ENCODE measurements at regions of chr11 and their contacts with region 1.

Region 1: GRCh38 chr11:82927254-82927880 is 25.8 kb downstream of the DDIAS start:
- DNase-seq: peak in 6 of 9 experiments; percentile 11 to 83 (median 31)
- ATAC-seq: peak; percentile 98
- H3K4me3 ChIP-seq: no peak overlapping the region
- H3K4me3 Mint-ChIP-seq: peak overlapping the region; percentile 26
- H3K27ac ChIP-seq: no peak overlapping the region
- H3K27ac Mint-ChIP-seq: peak overlapping the region; percentile 60
- H3K4me1 ChIP-seq: peaks cover 40% of the 10 kb centered on the region
- H3K4me1 Mint-ChIP-seq: peaks cover 53% of the 10 kb centered on the region
- H3K27me3 ChIP-seq: no peaks in the 10 kb centered on the region
- H3K27me3 Mint-ChIP-seq: no peaks in the 10 kb centered on the region
- CTCF ChIP-seq: peak; percentile 89

Region 2: GRCh38 chr11:82906244-82906654 is 21.1 kb before region 1 on chr11:
- CTCF ChIA-PET with region 1: interaction called, 5 read pairs
- POLR2A ChIA-PET with region 1: interaction called, 4 read pairs
- intact Hi-C with region 1: loop called (anchors 1 kb)
- DNase-seq: peak in 2 of 9 experiments; percentile 38 to 61
- ATAC-seq: no peak
- H3K4me3 ChIP-seq: no peak overlapping the region
- H3K4me3 Mint-ChIP-seq: no peak overlapping the region
- H3K27ac ChIP-seq: no peak overlapping the region
- H3K27ac Mint-ChIP-seq: peak overlapping the region; percentile 19
- H3K4me1 ChIP-seq: peaks cover 28% of the 10 kb centered on the region
- H3K4me1 Mint-ChIP-seq: peaks cover 38% of the 10 kb centered on the region
- H3K27me3 ChIP-seq: no peaks in the 10 kb centered on the region
- H3K27me3 Mint-ChIP-seq: no peaks in the 10 kb centered on the region
- CTCF ChIP-seq: peak; percentile 72

Region 3: DNA sequence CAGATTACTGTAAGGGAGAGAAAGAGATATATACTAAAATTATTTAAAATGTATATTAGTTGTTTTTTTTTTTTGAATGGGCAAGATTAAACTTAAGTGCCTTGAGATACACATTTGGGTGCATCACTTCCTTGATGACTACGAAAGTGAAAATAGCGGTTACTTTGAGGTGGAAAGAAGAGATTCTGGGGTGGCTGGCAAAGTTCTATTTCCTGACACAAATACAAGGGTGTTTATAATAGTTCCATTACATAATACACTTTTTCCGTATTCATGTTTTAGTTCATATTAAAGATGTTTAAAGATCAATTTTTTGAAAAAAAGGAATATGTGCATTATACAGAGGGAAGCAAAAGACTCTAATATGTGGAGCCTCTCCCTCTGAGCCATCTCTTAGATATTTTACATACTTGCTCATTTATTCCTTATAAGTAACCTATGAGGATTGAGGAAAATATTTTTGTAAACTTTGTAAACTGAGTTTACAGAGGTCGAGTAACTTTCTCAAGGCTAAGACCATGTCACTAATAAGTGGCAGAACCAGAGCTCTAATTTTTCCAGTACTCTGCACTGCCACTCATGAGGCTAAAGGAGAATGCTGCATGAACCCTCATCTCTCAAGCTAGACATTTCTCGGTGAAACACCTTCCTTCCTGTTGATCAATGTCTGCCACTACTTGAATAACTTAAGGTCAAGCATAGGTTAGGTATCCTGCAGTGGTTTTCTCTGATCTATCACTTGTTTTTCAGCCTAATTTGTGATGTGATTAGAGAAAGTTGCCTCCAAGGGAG is 32.8 kb after region 1 on chr11:
- CTCF ChIA-PET with region 1: interaction called, 9 read pairs
- POLR2A ChIA-PET with region 1: interaction called, 7 read pairs
- intact Hi-C with region 1: loop called (anchors 1 kb)
- DNase-seq: peak in 7 of 9 experiments; percentile 25 to 89 (median 42)
- ATAC-seq: peak; percentile 78
- H3K4me3 ChIP-seq: peak overlapping the region; percentile 23 to 38
- H3K4me3 Mint-ChIP-seq: peak overlapping the region; percentile 55
- H3K27ac ChIP-seq: peak overlapping the region; percentile 79 to 89
- H3K27ac Mint-ChIP-seq: peak overlapping the region; percentile 98
- H3K4me1 ChIP-seq: peaks cover 92% of the 10 kb centered on the region
- H3K4me1 Mint-ChIP-seq: peaks cover 87% of the 10 kb centered on the region
- H3K27me3 ChIP-seq: no peaks in the 10 kb centered on the region
- H3K27me3 Mint-ChIP-seq: no peaks in the 10 kb centered on the region
- CTCF ChIP-seq: no peak

Region 4: DNA sequence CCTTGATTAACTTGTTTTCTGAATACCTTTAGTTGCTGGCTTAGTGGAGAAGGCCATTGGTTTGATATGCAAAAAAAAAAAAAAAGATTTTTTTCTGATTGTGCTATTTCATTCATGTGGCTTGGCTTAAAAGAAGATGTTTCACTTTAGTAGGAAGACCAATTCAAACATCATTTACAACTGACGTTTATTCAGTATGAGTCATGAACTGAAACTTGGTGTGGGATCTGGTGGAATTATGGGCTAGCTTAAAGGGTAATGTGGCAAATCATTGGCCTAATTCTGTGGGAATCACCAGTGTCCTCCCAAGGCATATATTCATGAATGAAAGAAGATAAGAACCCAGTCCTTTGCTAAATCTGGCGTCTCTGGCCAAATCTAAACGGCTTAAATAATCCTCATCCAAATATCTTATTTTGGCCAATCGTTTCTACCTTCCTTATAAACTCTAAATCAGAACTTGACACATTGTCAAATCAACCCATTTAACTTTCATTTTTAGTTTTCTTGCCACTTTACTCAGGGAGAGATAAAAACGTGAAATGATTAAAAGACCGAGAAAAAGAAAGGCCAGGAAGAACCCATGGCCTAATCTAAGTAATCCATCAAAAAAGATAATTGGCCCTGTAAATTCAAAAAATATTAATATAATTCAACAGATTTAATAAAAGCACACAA is 51.2 kb after region 1 on chr11:
- CTCF ChIA-PET with region 1: no interaction called
- POLR2A ChIA-PET with region 1: no interaction called
- intact Hi-C with region 1: loop called (anchors 2 to 5 kb)
- DNase-seq: peak in 1 of 9 experiments; percentile 48
- ATAC-seq: peak; percentile 85
- H3K4me3 ChIP-seq: no peak overlapping the region
- H3K4me3 Mint-ChIP-seq: peak overlapping the region; percentile 2
- H3K27ac ChIP-seq: no peak overlapping the region
- H3K27ac Mint-ChIP-seq: peak overlapping the region; percentile 66
- H3K4me1 ChIP-seq: peaks cover 11% of the 10 kb centered on the region
- H3K4me1 Mint-ChIP-seq: peaks cover 35% of the 10 kb centered on the region
- H3K27me3 ChIP-seq: no peaks in the 10 kb centered on the region
- H3K27me3 Mint-ChIP-seq: no peaks in the 10 kb centered on the region
- CTCF ChIP-seq: no peak

Region 5: GRCh38 chr11:82988936-82989627 is 61.7 kb after region 1 on chr11:
- CTCF ChIA-PET with region 1: interaction called, 10 read pairs
- POLR2A ChIA-PET with region 1: no interaction called
- intact Hi-C with region 1: loop called in 1 of 2 experiments (anchors 2 kb)
- DNase-seq: no peak
- ATAC-seq: no peak
- H3K4me3 ChIP-seq: no peak overlapping the region
- H3K4me3 Mint-ChIP-seq: no peak overlapping the region
- H3K27ac ChIP-seq: no peak overlapping the region
- H3K27ac Mint-ChIP-seq: peak overlapping the region; percentile 8
- H3K4me1 ChIP-seq: peaks cover 3% of the 10 kb centered on the region
- H3K4me1 Mint-ChIP-seq: peaks cover 28% of the 10 kb centered on the region
- H3K27me3 ChIP-seq: no peaks in the 10 kb centered on the region
- H3K27me3 Mint-ChIP-seq: no peaks in the 10 kb centered on the region
- CTCF ChIP-seq: no peak

Region 6: DNA sequence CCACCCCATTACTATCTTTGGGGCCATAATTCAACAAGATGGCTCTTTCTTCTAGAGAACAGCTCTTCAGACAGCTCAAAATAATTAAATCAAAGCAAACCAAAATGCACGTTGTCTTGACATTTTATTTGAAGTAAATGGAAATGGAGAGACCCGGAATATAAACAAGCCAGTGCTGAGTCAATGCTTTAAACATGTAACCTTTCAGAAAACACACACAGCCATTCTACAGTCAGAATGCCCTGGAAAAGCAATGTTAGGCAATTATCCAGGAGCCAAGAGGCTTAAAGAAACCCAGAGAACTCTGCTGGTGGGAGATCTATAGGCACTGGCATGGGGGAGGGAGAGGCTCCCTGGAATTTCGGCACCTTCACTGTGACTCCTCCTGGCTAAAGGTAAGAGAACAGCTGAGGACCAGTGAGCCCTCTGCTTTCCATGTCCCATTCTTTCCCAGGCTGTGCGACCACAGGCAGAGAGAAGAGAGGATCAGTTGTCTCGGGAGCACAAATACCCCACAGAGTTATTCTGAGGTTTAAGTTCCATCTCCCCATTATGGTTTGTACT is 612.8 kb after region 1 on chr11:
- CTCF ChIA-PET with region 1: no interaction called
- POLR2A ChIA-PET with region 1: no interaction called
- intact Hi-C with region 1: no loop called
- DNase-seq: no peak
- ATAC-seq: no peak
- H3K4me3 ChIP-seq: no peak overlapping the region
- H3K4me3 Mint-ChIP-seq: no peak overlapping the region
- H3K27ac ChIP-seq: no peak overlapping the region
- H3K27ac Mint-ChIP-seq: no peak overlapping the region
- H3K4me1 ChIP-seq: no peaks in the 10 kb centered on the region
- H3K4me1 Mint-ChIP-seq: no peaks in the 10 kb centered on the region
- H3K27me3 ChIP-seq: no peaks in the 10 kb centered on the region
- H3K27me3 Mint-ChIP-seq: peaks cover 5% of the 10 kb centered on the region
- CTCF ChIP-seq: no peak